ENCODE measurements at regions of chr7 and their contacts with region 1.

Region 1: DNA sequence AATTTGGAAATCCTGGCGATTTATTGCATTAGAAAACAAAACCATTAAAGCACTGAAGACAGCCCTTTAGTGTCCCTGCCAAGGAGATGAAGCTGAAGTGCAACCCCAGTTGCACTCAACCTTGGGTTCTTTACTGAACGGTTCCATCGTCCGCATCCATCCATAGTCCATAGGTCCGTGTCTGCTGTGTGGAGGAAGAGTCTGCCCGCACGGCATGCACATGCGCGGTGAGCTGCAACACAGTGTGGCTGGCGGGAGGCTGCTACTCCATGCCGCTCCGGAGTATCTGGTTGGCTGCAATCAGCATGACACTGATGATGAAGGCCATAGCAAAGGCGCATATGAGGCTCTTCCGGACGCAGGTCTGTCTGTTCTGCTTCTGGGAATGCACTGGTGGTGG is 624.6 kb downstream of the CALN1 start:
- DNase-seq: no peak
- H3K4me3 ChIP-seq: no peak overlapping the region
- CTCF ChIP-seq: no peak

Region 2: DNA sequence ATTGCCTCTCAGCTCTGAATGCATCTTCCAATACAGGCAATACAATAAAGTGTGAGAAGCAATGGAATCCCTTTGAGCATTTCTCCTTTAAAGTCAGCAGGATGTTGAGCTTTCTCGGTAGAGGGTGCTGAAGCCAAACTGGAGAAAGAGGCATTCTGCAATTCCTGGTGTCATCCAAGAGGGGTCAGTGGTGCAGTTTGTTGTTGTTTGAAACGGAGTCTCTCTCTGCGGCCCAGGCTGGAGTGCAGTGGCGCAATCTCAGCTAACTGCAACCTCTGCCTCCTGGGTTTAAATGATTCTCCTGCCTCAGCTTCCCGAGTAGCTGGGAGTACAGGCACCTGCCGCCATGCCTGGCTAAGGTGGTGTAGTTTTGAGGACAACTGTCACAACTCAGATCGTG is 138.2 kb after region 1 on chr7:
- in situ Hi-C with region 1: loop called (anchors 10 kb)
- DNase-seq: no peak
- H3K4me3 ChIP-seq: no peak overlapping the region
- CTCF ChIP-seq: no peak

Region 3: DNA sequence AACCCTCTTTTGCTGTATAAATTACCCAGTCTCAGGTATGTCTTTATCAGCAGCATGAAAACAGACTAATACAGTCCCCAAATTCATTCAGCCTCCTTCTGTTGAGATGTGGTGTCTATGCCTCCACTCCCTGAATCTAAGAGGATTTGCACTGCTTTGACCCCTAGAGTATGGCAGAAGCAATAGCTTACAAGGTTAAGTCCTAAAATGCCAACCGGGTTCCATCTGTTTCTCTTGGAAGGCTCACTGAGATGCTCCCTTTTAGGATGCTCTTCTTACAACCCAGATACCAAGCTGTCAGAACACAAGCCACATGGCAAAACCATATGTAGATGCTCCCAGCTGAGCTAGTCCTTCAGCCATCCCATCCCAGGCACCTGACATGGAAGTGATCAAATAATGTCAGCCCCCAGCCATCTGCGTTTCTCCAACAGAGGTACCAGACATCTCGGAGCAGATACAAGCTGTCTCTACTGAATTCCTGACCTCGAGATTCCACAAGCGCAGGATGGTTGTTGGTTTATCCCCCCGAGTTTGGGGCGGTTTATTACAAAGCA is 604.4 kb after region 1 on chr7:
- in situ Hi-C with region 1: loop called (anchors 10 kb)
- DNase-seq: no peak
- H3K4me3 ChIP-seq: no peak overlapping the region
- CTCF ChIP-seq: no peak

Measured in astrocyte of the cerebellum (primary cell).